H1 (cell line): ENCODE measurements at regions of chr12 and their contacts with region 1.

Region 1: GRCh38 chr12:6195665-6196535 is 4.3 kb upstream of the CD9 start:
- DNase-seq: peak; percentile 84 to 99
- H3K4me3 ChIP-seq: no peak overlapping the region
- H3K27ac ChIP-seq: no peak overlapping the region
- H3K4me1 ChIP-seq: peaks cover 7 to 24% (median 15%) of the 10 kb centered on the region in 4 experiments
- H3K27me3 ChIP-seq: peaks cover 0 to 10% (median 6%) of the 10 kb centered on the region in 4 experiments; a peak in 3 of 7 replicates
- CTCF ChIP-seq: peak; percentile 83 to 98 (median 95)
- EP300 ChIP-seq: no peak
- POLR2A ChIP-seq: no peak
- RAD21 ChIP-seq: peak; percentile 91 to 95

Region 2: DNA sequence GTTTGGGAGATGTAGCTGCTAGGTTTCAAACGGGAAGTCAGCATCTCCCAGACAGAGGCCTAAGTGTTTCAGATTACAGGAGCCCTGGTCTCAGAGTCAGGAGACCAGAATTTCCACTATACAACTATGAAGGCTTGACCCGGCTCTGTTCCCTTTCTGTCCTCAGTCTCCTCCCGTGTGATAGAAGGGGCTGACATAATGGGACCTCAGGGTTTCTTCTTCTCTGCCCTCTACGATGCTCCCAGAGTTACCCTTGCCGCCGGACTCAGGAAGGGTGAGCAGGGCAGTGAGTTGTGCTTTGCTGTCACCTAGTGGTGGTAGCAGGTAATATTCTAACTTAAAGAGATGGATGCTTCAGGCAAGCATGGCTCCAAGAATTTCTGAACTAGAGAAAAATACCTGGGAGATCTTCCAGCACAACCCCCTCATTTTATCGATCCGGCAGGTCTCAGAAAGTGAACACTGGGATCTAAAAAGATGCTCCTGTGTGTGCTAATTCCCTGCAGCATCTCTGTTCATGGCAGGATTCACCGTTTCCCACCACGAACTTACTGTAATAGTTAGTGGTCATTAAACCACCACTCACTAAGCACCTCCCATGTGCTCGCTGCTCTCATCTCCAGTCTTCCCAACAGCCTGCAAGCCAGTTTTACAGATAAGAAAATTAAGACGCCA is 155.9 kb before region 1 on chr12:
- CTCF ChIA-PET with region 1: interaction called, 11 read pairs
- POLR2A ChIA-PET with region 1: no interaction called
- DNase-seq: peak in 1 of 2 experiments; percentile 69
- H3K4me3 ChIP-seq: no peak overlapping the region
- H3K27ac ChIP-seq: no peak overlapping the region
- H3K4me1 ChIP-seq: peaks cover 0 to 4% (median 2%) of the 10 kb centered on the region in 4 experiments; a peak in 4 of 7 replicates
- H3K27me3 ChIP-seq: peaks cover 0 to 2% (median 0%) of the 10 kb centered on the region in 4 experiments; a peak in 2 of 7 replicates
- CTCF ChIP-seq: peak; percentile 72 to 94 (median 85)
- EP300 ChIP-seq: no peak
- POLR2A ChIP-seq: no peak
- RAD21 ChIP-seq: peak; percentile 97 to 98

Region 3: DNA sequence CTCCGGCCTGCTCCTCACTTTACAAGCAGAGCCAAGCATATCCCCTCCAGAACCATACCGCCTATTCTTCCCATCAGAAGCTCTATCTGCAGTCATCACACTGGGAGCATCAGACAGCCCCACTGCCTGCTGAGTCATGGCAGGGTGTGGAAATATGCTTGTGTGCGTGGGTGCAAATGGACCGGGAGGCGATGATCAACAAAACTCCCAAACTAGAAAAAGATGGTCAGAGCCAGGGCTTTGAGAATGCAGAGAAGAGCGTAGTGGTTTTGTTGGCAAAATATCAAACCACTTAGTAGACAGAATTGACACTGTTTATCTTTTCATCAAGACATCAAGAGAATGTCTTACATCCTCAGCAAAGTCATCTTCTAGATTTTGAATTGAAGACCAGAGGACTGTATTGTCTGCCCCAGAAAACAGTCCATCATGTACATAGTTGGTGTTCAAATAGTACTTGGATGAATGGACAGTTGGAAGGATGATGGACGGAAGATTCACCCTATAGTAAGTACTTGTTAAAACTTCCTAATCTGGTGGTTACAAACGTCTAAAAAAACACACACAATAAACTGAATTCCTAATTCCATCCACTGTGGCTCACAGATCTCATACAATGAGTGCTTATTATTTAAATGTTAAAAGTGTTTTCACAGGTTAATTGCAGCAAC is 126.3 kb before region 1 on chr12:
- CTCF ChIA-PET with region 1: interaction called, 50 read pairs
- POLR2A ChIA-PET with region 1: interaction called, 5 read pairs
- DNase-seq: no peak
- H3K4me3 ChIP-seq: no peak overlapping the region
- H3K27ac ChIP-seq: no peak overlapping the region
- H3K4me1 ChIP-seq: peaks cover 0 to 7% (median 3%) of the 10 kb centered on the region in 4 experiments; a peak in 4 of 7 replicates
- H3K27me3 ChIP-seq: no peaks in the 10 kb centered on the region
- CTCF ChIP-seq: no peak
- EP300 ChIP-seq: no peak
- POLR2A ChIP-seq: no peak
- RAD21 ChIP-seq: no peak

Region 4: GRCh38 chr12:6207259-6207925 is 11.5 kb after region 1 on chr12:
- CTCF ChIA-PET with region 1: interaction called, 130 read pairs
- POLR2A ChIA-PET with region 1: interaction called, 203 read pairs
- DNase-seq: no peak
- H3K4me3 ChIP-seq: no peak overlapping the region
- H3K27ac ChIP-seq: no peak overlapping the region
- H3K4me1 ChIP-seq: peaks cover 27 to 42% (median 34%) of the 10 kb centered on the region in 4 experiments
- H3K27me3 ChIP-seq: no peaks in the 10 kb centered on the region
- CTCF ChIP-seq: no peak
- EP300 ChIP-seq: no peak
- POLR2A ChIP-seq: no peak
- RAD21 ChIP-seq: no peak

Region 5: DNA sequence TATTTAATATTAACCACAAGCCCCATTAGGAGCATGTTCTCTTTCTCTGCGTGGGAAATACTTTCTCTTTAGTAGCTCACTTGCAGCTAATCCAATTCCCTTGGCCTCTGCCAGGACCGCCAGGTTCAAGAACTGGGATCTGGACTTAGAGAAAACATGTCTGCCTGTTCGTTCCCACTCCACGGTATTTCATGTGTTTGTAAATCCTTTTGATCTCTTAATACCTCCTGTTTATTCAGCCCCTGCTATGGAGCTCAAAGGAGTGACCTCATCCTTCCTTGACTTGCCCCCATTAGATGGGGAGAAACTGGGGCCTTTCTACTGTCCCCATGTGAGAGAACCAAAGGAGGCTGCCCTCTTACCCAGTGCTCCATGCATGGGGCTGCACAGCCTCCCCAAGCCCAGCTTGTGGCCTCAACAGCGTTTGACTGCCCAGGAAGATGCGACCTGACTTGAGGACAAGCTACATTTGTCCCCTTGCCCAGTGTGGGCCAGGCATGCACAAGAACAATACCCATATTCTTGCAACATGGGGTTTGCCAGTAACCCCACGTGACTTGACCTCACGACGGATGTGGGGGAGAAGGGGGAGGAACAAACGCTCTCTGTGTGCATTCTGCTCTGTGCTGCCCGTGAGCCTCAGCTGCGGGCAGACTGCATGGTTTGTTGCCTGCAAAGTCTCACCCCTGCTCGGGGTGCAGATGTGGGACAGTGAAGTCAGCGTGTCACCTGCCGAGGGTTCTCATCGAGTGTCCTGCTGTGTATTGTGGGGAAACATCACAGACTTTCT is 34.6 kb after region 1 on chr12:
- CTCF ChIA-PET with region 1: interaction called, 130 read pairs
- POLR2A ChIA-PET with region 1: interaction called, 4 read pairs
- DNase-seq: no peak
- H3K4me3 ChIP-seq: no peak overlapping the region
- H3K27ac ChIP-seq: no peak overlapping the region
- H3K4me1 ChIP-seq: peaks cover 0 to 7% (median 4%) of the 10 kb centered on the region in 4 experiments; a peak in 6 of 7 replicates
- H3K27me3 ChIP-seq: no peaks in the 10 kb centered on the region
- CTCF ChIP-seq: no peak
- EP300 ChIP-seq: no peak
- POLR2A ChIP-seq: no peak
- RAD21 ChIP-seq: no peak

Region 6: DNA sequence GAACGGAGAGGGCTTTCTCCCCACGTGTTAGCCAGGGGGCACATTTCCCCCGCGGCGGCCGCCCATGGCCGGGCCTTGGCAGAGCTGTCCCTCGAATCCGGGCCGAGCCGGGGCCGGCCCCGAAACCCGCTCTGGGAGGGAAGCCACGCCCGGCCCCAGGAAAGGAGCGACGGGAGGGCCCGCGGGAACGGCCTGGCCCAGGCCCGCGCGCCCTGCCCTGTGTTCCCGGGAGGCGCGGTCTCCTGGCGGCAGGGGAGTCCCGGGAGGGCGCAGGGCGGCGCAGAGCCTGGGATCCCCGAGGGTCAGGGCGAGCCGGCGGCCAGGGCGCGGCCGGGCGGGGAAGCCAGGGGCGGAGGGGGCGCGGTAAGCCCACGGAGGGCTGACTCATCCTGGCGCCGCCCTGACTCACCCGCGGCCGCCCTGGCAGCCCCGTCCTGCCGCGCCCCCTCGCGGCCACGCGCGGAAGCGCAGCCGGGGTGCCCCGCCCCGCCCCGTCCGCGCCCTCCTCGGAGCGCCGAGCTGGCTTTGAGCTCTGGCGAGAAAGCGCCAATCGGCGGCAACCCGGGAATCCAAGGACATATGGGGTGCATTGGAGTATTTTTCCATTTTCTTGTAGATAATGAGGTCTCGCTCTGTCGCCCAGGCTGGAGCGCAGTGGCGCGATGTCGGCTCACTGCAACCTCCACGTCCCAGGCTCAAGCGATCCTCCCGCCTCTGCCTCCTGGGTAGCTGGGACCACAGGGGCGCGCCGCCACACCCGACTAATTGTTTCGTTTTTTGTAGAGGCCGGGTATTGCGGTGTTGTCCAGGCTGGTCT is 82.7 kb after region 1 on chr12:
- CTCF ChIA-PET with region 1: interaction called, 433 read pairs
- POLR2A ChIA-PET with region 1: interaction called, 33 read pairs
- DNase-seq: peak; percentile 39 to 97
- H3K4me3 ChIP-seq: peak overlapping the region; percentile 28 to 64 (median 40)
- H3K27ac ChIP-seq: peak overlapping the region; percentile 61; the same call in 1 of the 2 replicates
- H3K4me1 ChIP-seq: peaks cover 15 to 33% (median 21%) of the 10 kb centered on the region in 4 experiments
- H3K27me3 ChIP-seq: no peaks in the 10 kb centered on the region; a peak in 1 of 7 replicates
- CTCF ChIP-seq: peak; percentile 82 to 87 (median 86)
- EP300 ChIP-seq: no peak
- POLR2A ChIP-seq: no peak
- RAD21 ChIP-seq: peak; percentile 49 to 87

Region 7: GRCh38 chr12:6489449-6489848 is 293.5 kb after region 1 on chr12:
- CTCF ChIA-PET with region 1: no interaction called
- POLR2A ChIA-PET with region 1: no interaction called
- DNase-seq: no peak
- H3K4me3 ChIP-seq: no peak overlapping the region
- H3K27ac ChIP-seq: no peak overlapping the region
- H3K4me1 ChIP-seq: peaks cover 0 to 6% (median 1%) of the 10 kb centered on the region in 4 experiments; a peak in 3 of 7 replicates
- H3K27me3 ChIP-seq: no peaks in the 10 kb centered on the region
- CTCF ChIP-seq: no peak
- EP300 ChIP-seq: no peak
- POLR2A ChIP-seq: no peak
- RAD21 ChIP-seq: no peak

Region 8: DNA sequence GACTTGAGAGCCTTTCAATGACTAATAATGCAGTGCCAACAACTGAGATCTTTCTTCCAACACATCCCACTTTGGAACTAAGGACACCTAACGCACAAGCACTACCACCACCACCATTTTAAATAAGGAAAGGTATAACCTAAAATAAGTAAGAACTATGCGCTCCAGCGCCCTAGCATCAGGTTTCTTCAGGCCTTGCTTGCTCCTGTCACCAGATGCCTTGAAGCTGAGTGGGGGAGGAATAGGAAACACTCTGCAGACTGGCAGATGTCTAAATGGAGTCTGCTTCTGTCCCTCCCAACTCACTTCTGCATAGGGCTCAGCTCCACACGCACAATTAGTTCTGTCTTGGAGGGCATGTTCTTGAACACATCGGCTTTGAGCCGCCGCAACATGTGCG is 396.2 kb after region 1 on chr12:
- CTCF ChIA-PET with region 1: no interaction called
- POLR2A ChIA-PET with region 1: no interaction called
- DNase-seq: no peak
- H3K4me3 ChIP-seq: no peak overlapping the region
- H3K27ac ChIP-seq: no peak overlapping the region
- H3K4me1 ChIP-seq: no peaks in the 10 kb centered on the region
- H3K27me3 ChIP-seq: no peaks in the 10 kb centered on the region
- CTCF ChIP-seq: no peak
- EP300 ChIP-seq: no peak
- POLR2A ChIP-seq: no peak
- RAD21 ChIP-seq: no peak